Activated CD4-positive, alpha-beta memory T cell treated with anti-CD3 and anti-CD28 coated beads, Interleukin-2, amount 10 ng/mL, durations not matched to agents 7 days and 5 days (primary cell): ENCODE measurements at regions of chr5 and their contacts with region 1.

Region 1: DNA sequence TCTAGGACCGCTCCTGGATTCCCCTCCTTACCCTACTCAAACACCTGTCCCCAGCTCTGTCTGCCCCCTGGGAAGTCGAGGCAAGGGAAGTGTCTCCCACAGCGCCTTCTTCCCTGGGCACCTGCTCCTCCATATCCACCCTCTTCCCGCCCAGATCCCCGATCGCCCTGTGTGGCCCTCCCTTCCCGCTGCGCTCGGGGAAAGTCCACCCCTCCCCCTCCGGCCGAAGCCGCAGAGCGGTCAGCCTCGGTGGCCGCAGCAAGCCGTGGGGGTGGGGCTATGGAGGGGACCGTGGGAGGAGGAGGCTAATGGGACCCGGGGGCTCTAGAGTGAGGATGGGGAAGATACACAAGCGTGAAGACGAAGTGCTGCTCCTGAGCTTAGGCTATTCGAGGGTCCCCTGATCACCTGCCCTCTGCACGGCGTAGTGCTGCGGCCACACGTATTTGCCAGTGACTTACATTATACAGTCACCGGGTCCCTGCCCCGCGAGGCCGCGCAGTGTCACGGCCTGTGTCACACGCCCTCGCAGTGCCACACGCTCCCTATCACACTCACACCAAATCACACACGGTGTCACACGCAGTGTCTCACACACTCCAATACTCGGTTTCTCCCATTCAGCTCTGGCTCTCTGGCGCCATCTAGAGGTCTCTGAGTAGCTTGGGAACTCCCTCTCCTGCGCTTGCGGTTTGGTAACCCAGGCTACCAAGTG is 658 bp upstream of the PCDH1 start:
- DNase-seq: peak; percentile 89
- H3K4me3 Mint-ChIP-seq: peak overlapping the region; percentile 70
- H3K27ac Mint-ChIP-seq: no peak overlapping the region
- H3K4me1 Mint-ChIP-seq: peaks cover 29% of the 10 kb centered on the region
- H3K27me3 Mint-ChIP-seq: peaks cover 84% of the 10 kb centered on the region

Region 2: GRCh38 chr5:141701360-141702119 is 177.3 kb before region 1 on chr5:
- CTCF ChIA-PET with region 1: interaction called, 157 read pairs
- POLR2A ChIA-PET with region 1: interaction called, 6 read pairs
- DNase-seq: no peak
- H3K4me3 Mint-ChIP-seq: peak overlapping the region; percentile 70
- H3K27ac Mint-ChIP-seq: no peak overlapping the region
- H3K4me1 Mint-ChIP-seq: peaks cover 20% of the 10 kb centered on the region
- H3K27me3 Mint-ChIP-seq: peaks cover 36% of the 10 kb centered on the region

Region 3: DNA sequence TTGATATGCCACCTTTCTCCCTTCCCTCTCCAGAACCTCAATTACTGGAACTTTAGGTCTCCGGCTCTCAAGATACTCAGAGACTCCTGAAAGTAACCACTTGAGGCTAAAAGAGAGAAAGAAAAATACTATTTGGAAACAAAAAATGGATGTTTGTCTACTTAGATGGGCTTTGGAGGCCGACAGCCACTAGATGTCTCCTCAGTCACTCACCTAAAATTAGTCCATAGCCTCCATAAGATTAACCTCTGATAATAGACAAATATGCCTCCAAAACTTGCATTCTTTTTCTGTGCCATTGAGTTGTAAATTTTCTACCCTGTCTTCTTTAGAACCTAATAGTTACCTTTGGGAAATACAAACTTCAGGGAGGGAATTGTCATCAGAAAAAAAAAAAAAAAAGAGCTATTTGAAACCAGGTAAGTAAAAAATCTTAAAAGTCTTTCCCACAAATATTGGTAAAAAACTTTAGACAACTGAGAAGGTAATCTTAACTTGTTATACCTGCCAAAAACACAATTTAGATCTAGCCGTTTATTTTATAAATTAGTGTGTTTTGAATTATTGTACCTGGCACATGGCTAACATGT is 10.5 kb after region 1 on chr5:
- CTCF ChIA-PET with region 1: interaction called, 32 read pairs
- POLR2A ChIA-PET with region 1: no interaction called
- DNase-seq: no peak
- H3K4me3 Mint-ChIP-seq: no peak overlapping the region
- H3K27ac Mint-ChIP-seq: no peak overlapping the region
- H3K4me1 Mint-ChIP-seq: no peaks in the 10 kb centered on the region
- H3K27me3 Mint-ChIP-seq: peaks cover 38% of the 10 kb centered on the region

Region 4: DNA sequence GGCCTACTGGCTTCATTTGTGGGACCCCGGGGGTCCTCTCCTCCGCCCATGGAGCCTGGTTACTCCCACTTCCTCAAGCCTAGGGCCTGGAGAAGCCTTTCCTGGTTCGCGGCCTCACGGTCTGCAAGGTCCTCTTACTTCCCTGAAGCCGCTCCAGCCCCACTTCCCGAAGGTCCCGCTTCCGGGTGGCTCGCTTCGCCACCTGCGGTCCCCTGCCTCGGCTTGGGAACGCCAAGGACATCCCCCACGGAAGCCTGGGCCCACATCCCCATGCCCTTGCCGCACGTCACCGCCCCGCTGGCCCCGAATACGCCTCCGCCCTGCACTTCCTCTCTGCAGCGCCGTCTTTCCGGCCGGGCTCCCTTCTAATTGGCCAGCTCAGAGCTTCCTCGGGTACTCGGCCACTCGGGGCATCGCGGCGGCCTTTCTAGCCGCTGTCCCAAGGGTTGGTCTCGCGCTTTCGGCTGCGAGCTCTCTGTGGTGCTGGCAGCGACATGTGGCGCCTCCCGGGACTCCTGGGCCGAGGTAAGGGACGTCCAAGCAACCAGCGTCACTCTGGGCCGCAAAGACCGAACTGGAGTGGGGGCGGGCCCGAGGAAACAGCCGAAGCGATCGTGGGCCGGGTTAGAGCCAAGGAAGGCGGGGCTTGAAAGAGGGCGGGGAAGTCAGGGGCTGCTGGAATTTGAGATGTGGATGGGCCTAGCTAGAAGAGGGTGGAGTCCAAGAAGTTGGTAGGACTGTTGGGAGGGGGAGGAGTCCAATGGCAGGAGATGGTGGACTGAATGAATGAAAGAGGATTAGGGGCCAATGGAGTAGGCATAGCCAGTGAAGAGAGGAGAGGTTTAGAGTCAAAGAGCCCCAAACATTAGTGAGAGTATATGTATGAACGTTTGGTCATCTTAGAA is 44.8 kb after region 1 on chr5 and contains the start of gene DELE1:
- CTCF ChIA-PET with region 1: interaction called, 21 read pairs
- POLR2A ChIA-PET with region 1: interaction called, 6 read pairs
- DNase-seq: peak; percentile 94
- H3K4me3 Mint-ChIP-seq: peak within 1 kb of the TSS; percentile 84
- H3K27ac Mint-ChIP-seq: peak within 1 kb of the TSS; percentile 83
- H3K4me1 Mint-ChIP-seq: peaks cover 39% of the 10 kb centered on the region
- H3K27me3 Mint-ChIP-seq: no peaks in the 10 kb centered on the region
- total RNA-seq, gene DELE1: 73.4 to 80.7 TPM